GM12878 (cell line): ENCODE measurements at regions of chr4 and their contacts with region 1.

Region 1: GRCh38 chr4:88366460-88366859 is 12.2 kb upstream of the HERC6 start:
- DNase-seq: no peak
- ATAC-seq: peak; percentile 36
- H3K4me3 ChIP-seq: no peak overlapping the region
- H3K27ac ChIP-seq: no peak overlapping the region
- H3K4me1 ChIP-seq: no peaks in the 10 kb centered on the region
- H3K27me3 ChIP-seq: no peaks in the 10 kb centered on the region
- CTCF ChIP-seq: no peak
- EP300 ChIP-seq: no peak
- POLR2A ChIP-seq: no peak
- RAD21 ChIP-seq: no peak

Region 2: DNA sequence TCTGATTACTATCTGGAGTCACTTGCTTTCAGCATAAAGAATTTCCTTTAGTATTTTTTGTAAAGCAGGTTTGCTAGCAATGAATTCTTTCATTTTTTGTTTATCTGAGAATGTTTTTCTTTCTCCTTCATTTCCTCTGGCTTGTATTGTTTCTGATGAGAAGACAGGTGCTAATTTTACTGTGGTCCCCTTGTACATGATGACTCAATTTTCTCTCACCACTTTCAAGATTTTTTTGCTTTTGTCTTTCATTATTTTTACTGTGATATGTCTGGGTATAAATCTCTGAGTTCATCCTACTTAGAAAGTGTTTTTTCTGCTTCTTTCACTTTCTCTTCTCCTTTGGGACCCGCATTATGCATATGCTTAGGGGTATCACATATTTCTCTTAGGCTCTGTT is 296.4 kb before region 1 on chr4:
- CTCF ChIA-PET with region 1: no interaction called
- POLR2A ChIA-PET with region 1: no interaction called
- RAD21 ChIA-PET with region 1: no interaction called
- SMC1A ChIA-PET with region 1: no interaction called
- in situ Hi-C with region 1: no loop called
- intact Hi-C with region 1: no loop called
- DNase-seq: no peak
- ATAC-seq: no peak
- H3K4me3 ChIP-seq: no peak overlapping the region
- H3K27ac ChIP-seq: no peak overlapping the region
- H3K4me1 ChIP-seq: no peaks in the 10 kb centered on the region
- H3K27me3 ChIP-seq: no peaks in the 10 kb centered on the region
- CTCF ChIP-seq: no peak
- EP300 ChIP-seq: no peak
- POLR2A ChIP-seq: no peak
- RAD21 ChIP-seq: no peak

Region 3: GRCh38 chr4:88217169-88217568 is 149.3 kb before region 1 on chr4:
- CTCF ChIA-PET with region 1: interaction called, 25 read pairs
- POLR2A ChIA-PET with region 1: no interaction called
- RAD21 ChIA-PET with region 1: interaction called, 13 read pairs
- SMC1A ChIA-PET with region 1: interaction called, 23 read pairs
- in situ Hi-C with region 1: no loop called
- intact Hi-C with region 1: loop called (anchors 2 kb)
- DNase-seq: no peak
- ATAC-seq: no peak
- H3K4me3 ChIP-seq: no peak overlapping the region
- H3K27ac ChIP-seq: no peak overlapping the region
- H3K4me1 ChIP-seq: no peaks in the 10 kb centered on the region
- H3K27me3 ChIP-seq: no peaks in the 10 kb centered on the region
- CTCF ChIP-seq: no peak
- EP300 ChIP-seq: no peak
- POLR2A ChIP-seq: no peak
- RAD21 ChIP-seq: no peak

Region 4: DNA sequence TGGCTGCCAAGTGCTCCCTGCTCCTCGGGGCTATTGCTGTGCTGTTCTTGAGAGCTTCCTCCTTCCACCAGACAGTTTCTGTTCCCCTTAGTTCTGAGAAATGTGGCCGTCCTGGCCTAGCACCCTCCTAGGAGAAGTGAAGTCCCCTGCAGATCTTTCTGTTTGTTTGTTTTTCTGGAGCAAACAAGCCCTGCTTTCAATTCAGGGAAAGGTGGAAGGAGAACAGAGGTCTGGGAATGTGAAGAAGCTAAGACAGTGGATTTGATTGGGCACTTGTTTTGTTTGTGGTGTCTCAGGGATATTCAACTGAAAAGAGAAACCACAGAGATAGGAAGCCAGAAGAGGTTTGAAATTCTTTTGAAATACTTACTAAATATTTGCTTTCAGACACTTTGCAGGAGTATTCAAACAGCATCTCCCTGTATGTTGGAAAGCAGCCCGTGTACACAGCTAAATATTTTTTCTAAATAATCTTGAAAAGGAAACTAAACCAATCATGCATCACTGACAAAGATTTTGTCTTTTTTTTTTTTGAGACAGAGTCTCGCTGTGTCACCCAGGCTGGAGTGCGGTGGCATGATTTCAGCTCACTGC is 45.6 kb before region 1 on chr4:
- CTCF ChIA-PET with region 1: interaction called, 3 read pairs
- POLR2A ChIA-PET with region 1: interaction called, 3 read pairs
- RAD21 ChIA-PET with region 1: no interaction called
- SMC1A ChIA-PET with region 1: interaction called, 4 read pairs
- in situ Hi-C with region 1: no loop called
- intact Hi-C with region 1: loop called (anchors 2 kb)
- DNase-seq: peak; percentile 83
- ATAC-seq: peak; percentile 100
- H3K4me3 ChIP-seq: peak overlapping the region; percentile 53
- H3K27ac ChIP-seq: peak overlapping the region; percentile 93
- H3K4me1 ChIP-seq: peaks cover 17% of the 10 kb centered on the region
- H3K27me3 ChIP-seq: no peaks in the 10 kb centered on the region
- CTCF ChIP-seq: no peak
- EP300 ChIP-seq: peak in 1 of 2 experiments; percentile 80; a peak in 2 of 4 replicates
- POLR2A ChIP-seq: peak; percentile 49
- RAD21 ChIP-seq: no peak

Region 5: GRCh38 chr4:88378691-88379559 is 12.5 kb after region 1 on chr4 and contains the start of gene HERC6:
- CTCF ChIA-PET with region 1: interaction called, 15 read pairs
- POLR2A ChIA-PET with region 1: no interaction called
- RAD21 ChIA-PET with region 1: interaction called, 10 read pairs
- SMC1A ChIA-PET with region 1: interaction called, 5 read pairs
- in situ Hi-C with region 1: no loop called
- intact Hi-C with region 1: no loop called
- DNase-seq: peak; percentile 84
- ATAC-seq: peak; percentile 85
- H3K4me3 ChIP-seq: peak within 1 kb of the TSS; percentile 75
- H3K27ac ChIP-seq: peak within 1 kb of the TSS; percentile 82
- H3K4me1 ChIP-seq: peaks cover 24% of the 10 kb centered on the region
- H3K27me3 ChIP-seq: no peaks in the 10 kb centered on the region
- CTCF ChIP-seq: peak; percentile 69 to 83 (median 70)
- EP300 ChIP-seq: 0 out of 4 replicates have a peak, but pooled peaks of 1 of the 2 experiments have one; percentile 56
- POLR2A ChIP-seq: peak; percentile 78
- RAD21 ChIP-seq: peak; percentile 57
- polyA plus RNA-seq, gene HERC6: 1.7 to 2.2 TPM